Activated T-helper 1 cell treated with anti-CD3 and anti-CD28 coated beads, Interleukin-12 subunit alpha, Interleukin-12 subunit beta, Interleukin-2, Interleukin-4 antibody, amounts not matched to agents 30 ng/mL and 10 ng/mL and 1 ng/mL, durations not matched to agents 14 hours and 24 hours and 36 hours (primary cell): ENCODE measurements at regions of chr6 and their contacts with region 1.

Region 1: GRCh38 chr6:45714741-45715507 is 300.7 kb downstream of the CLIC5 start:
- DNase-seq: peak; percentile 46
- H3K4me3 Mint-ChIP-seq: no peak overlapping the region
- H3K27ac Mint-ChIP-seq: peak overlapping the region; percentile 73
- H3K4me1 Mint-ChIP-seq: peaks cover 38% of the 10 kb centered on the region
- H3K27me3 Mint-ChIP-seq: peaks cover 2% of the 10 kb centered on the region

Region 2: DNA sequence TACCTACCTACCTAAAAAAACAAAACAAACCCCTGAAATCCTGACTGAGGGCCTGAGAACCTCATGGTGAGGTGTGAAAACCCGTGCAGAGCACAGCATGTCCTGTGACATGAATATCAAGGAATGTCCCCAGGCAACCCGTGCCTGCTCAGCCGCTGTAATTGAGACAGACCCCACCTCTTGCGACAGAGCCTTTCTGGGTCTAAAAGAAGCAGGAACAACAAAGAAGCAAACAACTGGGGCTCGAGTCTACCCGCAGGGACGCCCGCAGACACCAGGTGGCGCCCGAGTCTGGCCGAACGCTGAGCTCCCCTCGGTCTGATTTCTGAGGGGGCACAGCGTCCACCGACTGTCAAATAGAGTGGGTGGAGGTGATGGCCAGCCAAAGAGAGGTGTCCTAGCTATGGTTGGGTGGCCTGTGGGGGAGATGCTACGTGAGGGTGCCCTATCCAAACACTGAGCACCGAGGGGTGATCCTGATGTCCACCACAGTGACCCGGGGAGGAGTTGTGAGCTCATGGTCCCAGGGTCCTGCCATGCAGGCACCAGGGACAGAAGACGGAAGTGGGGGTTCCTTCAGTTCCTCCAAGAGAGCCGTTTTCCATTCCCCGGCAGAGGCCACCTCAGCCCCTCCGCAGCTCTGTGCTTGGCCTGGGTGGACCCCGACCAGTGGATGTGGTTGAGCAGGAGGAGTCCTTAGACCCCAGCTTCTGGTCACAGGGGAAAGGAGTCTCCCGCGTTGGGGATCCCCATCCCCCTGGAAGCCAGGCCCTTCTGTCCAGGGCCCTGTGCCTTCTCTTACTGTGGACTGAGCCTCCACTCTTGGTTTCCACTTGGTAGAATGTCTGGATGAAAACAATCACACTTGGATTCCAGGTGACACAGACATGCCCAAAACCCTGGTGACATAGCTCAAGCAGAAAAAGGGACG is 1059.2 kb before region 1 on chr6:
- intact Hi-C with region 1: loop called (anchors 1 kb)
- DNase-seq: peak; percentile 47
- H3K4me3 Mint-ChIP-seq: no peak overlapping the region
- H3K27ac Mint-ChIP-seq: peak overlapping the region; percentile 8
- H3K4me1 Mint-ChIP-seq: peaks cover 8% of the 10 kb centered on the region
- H3K27me3 Mint-ChIP-seq: peaks cover 4% of the 10 kb centered on the region

Region 3: GRCh38 chr6:45156075-45156474 is 558.8 kb before region 1 on chr6:
- intact Hi-C with region 1: loop called (anchors 2 kb)
- DNase-seq: peak; percentile 47
- H3K4me3 Mint-ChIP-seq: no peak overlapping the region
- H3K27ac Mint-ChIP-seq: peak overlapping the region; percentile 53
- H3K4me1 Mint-ChIP-seq: peaks cover 56% of the 10 kb centered on the region
- H3K27me3 Mint-ChIP-seq: no peaks in the 10 kb centered on the region

Region 4: GRCh38 chr6:45479834-45480751 is 234.8 kb before region 1 on chr6:
- intact Hi-C with region 1: loop called (anchors 2 kb)
- DNase-seq: no peak
- H3K4me3 Mint-ChIP-seq: no peak overlapping the region
- H3K27ac Mint-ChIP-seq: no peak overlapping the region
- H3K4me1 Mint-ChIP-seq: peaks cover 16% of the 10 kb centered on the region
- H3K27me3 Mint-ChIP-seq: peaks cover 3% of the 10 kb centered on the region

Region 5: GRCh38 chr6:45617441-45617840 is 97.5 kb before region 1 on chr6:
- intact Hi-C with region 1: no loop called
- DNase-seq: no peak
- H3K4me3 Mint-ChIP-seq: no peak overlapping the region
- H3K27ac Mint-ChIP-seq: no peak overlapping the region
- H3K4me1 Mint-ChIP-seq: peaks cover 39% of the 10 kb centered on the region
- H3K27me3 Mint-ChIP-seq: peaks cover 1% of the 10 kb centered on the region

Region 6: GRCh38 chr6:45677381-45678284 is 37.3 kb before region 1 on chr6:
- intact Hi-C with region 1: loop called (anchors 1 kb)
- DNase-seq: peak; percentile 47
- H3K4me3 Mint-ChIP-seq: peak overlapping the region; percentile 75
- H3K27ac Mint-ChIP-seq: peak overlapping the region; percentile 33
- H3K4me1 Mint-ChIP-seq: peaks cover 37% of the 10 kb centered on the region
- H3K27me3 Mint-ChIP-seq: peaks cover 9% of the 10 kb centered on the region